Dorsolateral prefrontal cortex (tissue), 120 donors: ENCODE measurements at regions of chr1 and their contacts with region 1.

Region 1: DNA sequence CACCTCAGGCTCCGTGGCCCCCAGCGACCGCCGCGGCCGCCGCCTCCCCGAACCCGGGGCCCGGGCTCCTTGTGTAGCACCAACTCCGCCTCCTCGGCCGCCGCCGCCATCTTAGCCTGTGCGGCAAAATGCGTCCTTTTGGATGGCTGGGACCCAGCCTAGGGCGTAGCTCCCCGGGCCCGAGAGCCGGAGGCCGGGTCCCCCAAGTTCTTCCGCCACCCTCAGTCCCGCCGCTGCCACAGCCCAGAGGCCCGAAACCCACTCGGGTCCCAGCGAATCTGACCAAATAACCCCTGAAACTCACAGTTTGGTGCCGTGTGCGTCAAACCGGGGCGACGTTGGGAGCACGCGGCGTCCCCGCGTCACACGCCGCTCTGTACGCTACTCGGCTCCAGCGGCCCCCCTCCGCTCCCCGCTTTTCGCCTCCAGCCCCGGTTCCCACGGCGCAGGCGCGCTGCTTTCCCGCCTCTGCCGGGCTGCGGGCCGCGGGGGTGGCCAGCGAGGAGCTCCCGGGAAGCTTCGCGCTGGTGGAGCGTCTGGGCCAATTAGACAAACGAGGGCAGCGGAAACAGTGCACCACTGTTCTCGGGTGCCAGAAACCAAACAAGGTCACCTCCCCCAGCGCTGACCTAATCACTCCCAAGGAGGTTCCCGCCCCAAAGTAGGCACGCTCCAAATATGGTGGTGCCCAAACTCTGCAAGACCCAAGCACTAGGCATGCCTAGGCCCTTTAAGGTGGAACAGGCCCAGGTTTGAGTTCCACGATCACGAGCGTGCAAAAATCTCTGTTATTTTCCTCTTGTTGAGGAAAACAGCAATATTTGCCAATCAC is at the start of gene ZNF644:
- DNase-seq: peak; percentile 86 to 97 (median 92)
- H3K4me3 ChIP-seq: peak within 1 kb of the TSS; percentile 70 to 96 (median 85)
- H3K27ac ChIP-seq: peak within 1 kb of the TSS; percentile 68 to 100 (median 99)
- H3K27me3 ChIP-seq: no peaks in the 10 kb centered on the region
- CTCF ChIP-seq: peak in 25 of 56 donors; percentile 3 to 49 (median 23)
- total RNA-seq, gene ZNF644: 55.9 to 109 (median 75.5) TPM

Region 2: GRCh38 chr1:90850898-90851710 is 170.8 kb before region 1 on chr1:
- intact Hi-C with region 1: loop called (anchors 5 to 10 kb)
- DNase-seq: peak in 8 of 10 donors; percentile 56 to 82 (median 72)
- H3K4me3 ChIP-seq: peak overlapping the region; percentile 48 to 92 (median 79)
- H3K27ac ChIP-seq: peak overlapping the region in 26 of 59 donors; percentile 0 to 86 (median 42)
- H3K27me3 ChIP-seq: peaks cover 0 to 6% (median 0%) of the 10 kb centered on the region in 45 donors
- CTCF ChIP-seq: peak; percentile 35 to 87 (median 76)

Region 3: GRCh38 chr1:90973897-90974798 is 47.8 kb before region 1 on chr1:
- intact Hi-C with region 1: loop called in 1 of 2 experiments (anchors 5 kb)
- DNase-seq: no peak
- H3K4me3 ChIP-seq: no peak overlapping the region
- H3K27ac ChIP-seq: peak overlapping the region in 41 of 59 donors; percentile 1 to 63 (median 30)
- H3K27me3 ChIP-seq: no peaks in the 10 kb centered on the region
- CTCF ChIP-seq: no peak